ENCODE measurements at regions of chr19 and their contacts with region 1.

Region 1: GRCh38 chr19:18112989-18113478 is 15.5 kb downstream of the MAST3 start:
- DNase-seq: peak; percentile 75 to 83 (median 78)
- H3K4me3 ChIP-seq: no peak overlapping the region
- H3K27ac ChIP-seq: no peak overlapping the region
- H3K4me1 ChIP-seq: peaks cover 0 to 46% (median 28%) of the 10 kb centered on the region in 4 experiments
- H3K27me3 ChIP-seq: no peaks in the 10 kb centered on the region

Region 2: DNA sequence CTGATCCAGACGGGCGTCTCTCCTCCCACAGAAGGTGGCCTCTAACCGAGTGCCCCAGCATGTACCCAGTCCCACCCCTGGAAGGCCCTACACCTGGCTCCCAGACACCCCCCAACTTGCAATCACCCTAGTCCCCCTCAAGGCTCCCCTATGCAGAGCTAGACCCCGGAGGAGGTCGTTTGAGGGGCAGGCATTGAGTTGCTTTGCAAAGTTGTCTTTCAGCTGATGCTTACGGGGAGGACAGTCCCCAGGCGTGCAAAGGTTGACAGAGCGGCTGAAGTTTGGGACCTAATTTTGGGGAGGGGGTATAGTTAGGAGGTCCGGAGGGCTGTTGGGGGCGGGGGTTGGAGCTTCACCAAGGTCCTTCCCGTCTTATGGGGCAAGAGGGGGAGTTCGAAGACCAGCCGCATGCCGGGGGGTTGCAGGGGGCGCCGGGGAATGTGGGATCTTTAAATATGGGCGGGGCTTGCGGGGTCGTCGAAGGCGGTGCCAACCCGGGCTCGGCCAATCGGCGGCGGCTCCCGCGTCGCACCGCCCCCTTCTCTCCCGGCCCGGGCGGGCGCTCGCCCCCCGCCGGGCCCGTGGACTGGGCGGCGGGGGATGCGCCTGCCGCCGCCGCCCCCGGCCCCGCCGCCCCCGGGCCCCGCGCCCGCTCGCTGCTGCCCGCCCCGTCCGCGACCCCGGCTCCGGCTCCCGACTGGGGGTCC is 146.3 kb before region 1 on chr19 and contains the start of gene KCNN1:
- CTCF ChIA-PET with region 1: no interaction called
- POLR2A ChIA-PET with region 1: no interaction called
- DNase-seq: no peak
- H3K4me3 ChIP-seq: peak within 1 kb of the TSS in 4 of 7 experiments; percentile 12 to 57 (median 38)
- H3K27ac ChIP-seq: no peak within 1 kb of the TSS
- H3K4me1 ChIP-seq: peaks cover 0 to 9% (median 5%) of the 10 kb centered on the region in 4 experiments
- H3K27me3 ChIP-seq: peaks cover 0 to 52% (median 7%) of the 10 kb centered on the region in 5 experiments

Region 3: DNA sequence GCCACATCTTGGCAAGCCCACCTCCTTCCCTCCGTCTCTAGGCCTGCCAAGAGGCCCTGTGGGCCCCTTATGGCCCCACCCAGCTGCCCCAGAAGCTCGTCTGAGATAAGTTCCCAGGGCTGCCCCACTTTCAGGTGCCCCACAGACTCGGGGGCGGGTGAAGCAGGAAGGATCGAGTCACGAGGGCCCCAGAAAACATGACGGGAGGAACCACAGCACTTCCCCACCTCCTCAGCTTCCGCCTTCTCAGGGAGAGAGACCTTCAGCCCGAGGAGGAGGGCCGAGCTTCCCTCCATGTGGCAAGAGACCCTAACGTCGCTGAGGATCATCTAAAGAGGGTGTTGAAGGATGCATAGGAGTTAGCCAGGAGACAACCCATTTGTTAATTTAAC is 21.8 kb before region 1 on chr19:
- CTCF ChIA-PET with region 1: interaction called, 18 read pairs
- POLR2A ChIA-PET with region 1: interaction called, 3 read pairs
- DNase-seq: peak; percentile 78 to 95 (median 91)
- H3K4me3 ChIP-seq: peak overlapping the region in 1 of 7 experiments; percentile 7
- H3K27ac ChIP-seq: peak overlapping the region; percentile 40 to 80
- H3K4me1 ChIP-seq: peaks cover 3 to 55% (median 34%) of the 10 kb centered on the region in 4 experiments
- H3K27me3 ChIP-seq: no peaks in the 10 kb centered on the region

Region 4: GRCh38 chr19:18122860-18123795 is 10.1 kb after region 1 on chr19:
- CTCF ChIA-PET with region 1: interaction called, 13 read pairs
- POLR2A ChIA-PET with region 1: no interaction called
- DNase-seq: no peak
- H3K4me3 ChIP-seq: no peak overlapping the region
- H3K27ac ChIP-seq: no peak overlapping the region
- H3K4me1 ChIP-seq: peaks cover 3 to 27% (median 16%) of the 10 kb centered on the region in 4 experiments
- H3K27me3 ChIP-seq: no peaks in the 10 kb centered on the region

Region 5: DNA sequence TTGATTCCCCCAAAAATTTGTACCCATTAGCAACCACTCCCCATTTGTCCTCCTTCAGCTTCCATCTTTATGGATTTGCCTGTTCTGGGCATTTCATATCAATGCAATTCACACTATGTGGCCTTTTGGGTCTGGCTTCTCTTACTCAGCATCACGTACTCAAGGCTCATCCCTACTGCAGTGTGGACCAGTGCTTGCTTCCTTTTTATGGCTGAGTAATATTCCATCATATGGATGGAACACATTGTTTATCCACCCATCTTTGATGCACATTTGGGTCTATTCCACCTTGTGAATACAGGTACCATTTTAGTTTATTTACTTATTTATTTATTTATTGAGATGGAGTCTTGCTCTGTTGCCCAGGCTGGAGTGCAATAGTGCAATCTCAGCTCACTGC is 27.4 kb after region 1 on chr19:
- CTCF ChIA-PET with region 1: no interaction called
- POLR2A ChIA-PET with region 1: no interaction called
- DNase-seq: no peak
- H3K4me3 ChIP-seq: no peak overlapping the region
- H3K27ac ChIP-seq: no peak overlapping the region
- H3K4me1 ChIP-seq: peaks cover 0 to 4% (median 0%) of the 10 kb centered on the region in 4 experiments
- H3K27me3 ChIP-seq: no peaks in the 10 kb centered on the region

Region 6: GRCh38 chr19:18152444-18152816 is 39.4 kb after region 1 on chr19:
- CTCF ChIA-PET with region 1: interaction called, 25 read pairs
- POLR2A ChIA-PET with region 1: no interaction called
- DNase-seq: peak; percentile 99 to 100 (median 99)
- H3K4me3 ChIP-seq: peak overlapping the region; percentile 66 to 92 (median 82)
- H3K27ac ChIP-seq: peak overlapping the region; percentile 98 to 99
- H3K4me1 ChIP-seq: peaks cover 0 to 46% (median 33%) of the 10 kb centered on the region in 4 experiments
- H3K27me3 ChIP-seq: no peaks in the 10 kb centered on the region

Region 7: DNA sequence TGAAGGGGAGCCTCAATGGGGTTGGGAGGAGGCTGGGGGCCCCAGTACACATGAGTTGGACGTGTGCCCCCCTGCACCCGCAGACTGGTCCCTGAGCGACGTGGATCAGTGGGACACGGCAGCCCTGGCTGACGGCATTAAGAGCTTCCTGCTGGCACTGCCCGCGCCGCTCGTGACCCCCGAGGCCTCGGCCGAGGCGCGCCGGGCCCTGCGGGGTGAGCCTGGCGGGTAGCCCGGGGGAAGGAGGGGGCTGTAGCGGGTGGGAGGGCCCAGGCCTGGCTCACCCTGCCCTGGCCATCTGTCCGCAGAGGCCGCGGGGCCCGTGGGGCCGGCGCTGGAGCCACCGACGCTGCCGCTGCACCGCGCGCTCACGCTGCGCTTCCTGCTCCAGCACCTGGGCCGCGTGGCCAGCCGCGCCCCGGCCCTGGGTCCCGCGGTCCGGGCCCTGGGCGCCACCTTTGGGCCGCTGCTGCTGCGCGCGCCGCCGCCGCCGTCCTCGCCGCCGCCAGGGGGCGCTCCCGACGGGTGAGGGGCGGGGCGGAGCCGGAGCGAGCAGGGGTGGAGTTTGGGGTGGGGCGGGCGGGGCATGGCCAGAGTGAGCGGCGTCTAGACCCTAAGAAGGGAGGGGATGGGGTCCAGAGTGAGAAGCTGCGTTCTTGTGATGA is 48.1 kb after region 1 on chr19:
- CTCF ChIA-PET with region 1: interaction called, 17 read pairs
- POLR2A ChIA-PET with region 1: no interaction called
- DNase-seq: peak; percentile 65 to 71 (median 70)
- H3K4me3 ChIP-seq: peak overlapping the region in 5 of 7 experiments; percentile 11 to 57 (median 31)
- H3K27ac ChIP-seq: peak overlapping the region in 1 of 2 experiments; percentile 61
- H3K4me1 ChIP-seq: peaks cover 0 to 34% (median 25%) of the 10 kb centered on the region in 4 experiments
- H3K27me3 ChIP-seq: no peaks in the 10 kb centered on the region

Region 8: DNA sequence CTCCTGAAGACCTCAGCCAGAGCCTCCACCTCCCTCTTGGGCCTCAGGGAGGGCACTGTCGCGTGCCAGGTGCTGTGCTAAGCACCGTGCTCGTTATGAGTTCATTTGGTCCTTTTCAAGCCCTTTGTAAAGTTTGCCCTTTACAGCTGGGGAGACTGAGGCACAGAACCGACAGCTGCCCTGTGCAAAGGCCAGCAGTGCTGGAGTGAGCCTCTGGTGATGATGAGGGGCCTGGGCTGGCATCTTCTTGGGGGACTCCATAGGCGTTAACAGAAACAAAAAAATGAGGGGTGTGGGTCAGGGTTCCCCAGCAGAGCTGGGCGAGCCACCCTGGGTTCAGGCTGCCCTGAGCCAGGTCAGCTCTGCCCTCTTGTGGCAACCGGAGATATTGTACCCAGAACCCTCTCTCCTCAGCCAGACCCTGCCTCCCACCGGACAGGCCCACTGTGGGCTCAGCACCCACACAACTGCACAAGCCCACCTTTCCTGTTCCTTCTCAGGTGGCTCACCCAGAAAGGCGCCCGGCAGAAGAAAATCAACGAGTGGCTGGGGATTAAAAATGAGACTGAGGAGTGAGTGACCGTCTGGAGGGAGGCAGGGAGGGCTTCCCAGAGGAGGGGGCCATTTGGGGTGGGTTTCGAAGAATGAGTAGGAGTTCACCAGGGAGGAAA is 55.1 kb after region 1 on chr19:
- CTCF ChIA-PET with region 1: interaction called, 16 read pairs
- POLR2A ChIA-PET with region 1: no interaction called
- DNase-seq: peak; percentile 63 to 79 (median 74)
- H3K4me3 ChIP-seq: no peak overlapping the region
- H3K27ac ChIP-seq: no peak overlapping the region
- H3K4me1 ChIP-seq: peaks cover 0 to 18% (median 12%) of the 10 kb centered on the region in 4 experiments
- H3K27me3 ChIP-seq: no peaks in the 10 kb centered on the region

Region 9: GRCh38 chr19:18208098-18208951 is 95.3 kb after region 1 on chr19:
- CTCF ChIA-PET with region 1: no interaction called
- POLR2A ChIA-PET with region 1: no interaction called
- DNase-seq: peak in 2 of 3 donors; percentile 52 to 57
- H3K4me3 ChIP-seq: no peak overlapping the region
- H3K27ac ChIP-seq: no peak overlapping the region
- H3K4me1 ChIP-seq: peaks cover 0 to 22% (median 20%) of the 10 kb centered on the region in 4 experiments
- H3K27me3 ChIP-seq: peaks cover 0 to 7% (median 2%) of the 10 kb centered on the region in 5 experiments

Region 10: DNA sequence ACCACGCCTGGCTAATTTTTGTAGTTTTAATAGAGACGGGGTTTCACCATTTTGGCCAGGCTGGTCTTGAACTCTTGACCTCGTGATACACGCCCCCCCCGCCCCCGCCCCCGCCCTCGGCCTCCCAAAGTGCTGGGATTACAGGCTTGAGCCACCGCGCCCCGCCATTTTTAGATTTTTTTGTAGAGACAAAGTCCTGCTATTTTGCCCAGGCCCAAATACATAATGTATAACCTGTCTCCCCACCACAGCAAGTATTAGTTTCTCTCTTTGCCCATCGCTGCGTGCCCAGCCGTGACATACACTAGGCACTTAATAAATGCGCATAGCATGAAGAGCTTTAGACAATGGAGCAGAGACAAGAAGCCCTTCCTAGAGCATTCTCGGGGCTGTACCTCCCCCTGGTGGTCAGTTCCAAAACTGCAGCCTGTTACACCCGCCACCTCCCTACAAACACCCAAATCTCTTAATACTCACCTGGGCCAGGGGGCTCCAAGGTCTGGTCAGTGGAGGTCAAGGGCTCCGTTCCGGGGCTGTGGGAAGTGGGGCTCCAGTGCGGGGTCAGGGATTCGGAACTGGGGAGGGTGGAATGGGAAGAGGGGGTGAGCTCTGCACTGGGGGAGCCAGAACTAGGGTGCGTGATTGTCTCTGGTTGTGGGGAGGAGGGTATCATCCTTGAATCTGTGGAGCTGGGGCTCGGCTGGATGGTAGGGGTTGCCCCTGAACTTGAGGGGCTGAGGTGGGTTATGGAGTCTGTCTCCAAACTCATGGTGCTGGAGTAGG is 138.7 kb after region 1 on chr19:
- CTCF ChIA-PET with region 1: interaction called, 12 read pairs
- POLR2A ChIA-PET with region 1: no interaction called
- DNase-seq: peak; percentile 67 to 84 (median 76)
- H3K4me3 ChIP-seq: no peak overlapping the region
- H3K27ac ChIP-seq: no peak overlapping the region
- H3K4me1 ChIP-seq: peaks cover 0 to 8% (median 3%) of the 10 kb centered on the region in 4 experiments
- H3K27me3 ChIP-seq: peaks cover 0 to 21% (median 4%) of the 10 kb centered on the region in 5 experiments

Region 11: GRCh38 chr19:18419195-18419698 is 306.2 kb after region 1 on chr19 and contains the start of gene SSBP4:
- CTCF ChIA-PET with region 1: no interaction called
- POLR2A ChIA-PET with region 1: no interaction called
- DNase-seq: peak; percentile 68 to 89 (median 85)
- H3K4me3 ChIP-seq: peak within 1 kb of the TSS; percentile 24 to 77 (median 65)
- H3K27ac ChIP-seq: peak within 1 kb of the TSS in 1 of 2 experiments; percentile 56
- H3K4me1 ChIP-seq: peaks cover 3 to 82% (median 74%) of the 10 kb centered on the region in 4 experiments
- H3K27me3 ChIP-seq: no peaks in the 10 kb centered on the region

Measured in common myeloid progenitor, CD34-positive (primary cell).